Adrenal gland (tissue), 19 donors: ENCODE measurements at regions of chr14 and their contacts with region 1.

Region 1: GRCh38 chr14:56474419-56475022 is 105.1 kb upstream of the TMEM260 start:
- DNase-seq: no peak
- H3K4me3 ChIP-seq: no peak overlapping the region
- H3K27ac ChIP-seq: no peak overlapping the region
- H3K4me1 ChIP-seq: no peaks in the 10 kb centered on the region
- H3K27me3 ChIP-seq: no peaks in the 10 kb centered on the region
- CTCF ChIP-seq: peak; percentile 61 to 84 (median 76)
- POLR2A ChIP-seq: no peak

Region 2: DNA sequence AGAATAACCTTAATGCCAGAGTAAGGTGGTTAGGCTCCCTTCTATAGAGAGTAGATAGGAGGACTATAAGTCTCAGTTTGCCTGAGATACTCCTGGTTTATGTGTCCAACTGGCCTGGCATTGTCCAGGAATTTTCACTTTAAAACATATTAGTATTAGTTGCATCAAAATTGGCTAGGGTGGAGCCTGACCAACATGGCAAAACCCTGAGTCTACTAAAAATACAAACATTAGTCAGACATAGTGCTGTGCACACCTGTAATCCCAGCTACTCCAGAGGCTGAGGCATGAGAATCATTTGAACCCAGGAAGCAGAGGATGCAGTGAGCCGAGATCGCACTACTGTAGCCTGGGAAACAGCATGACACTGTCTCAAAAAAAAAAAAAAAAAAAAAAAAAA is 1459.5 kb before region 1 on chr14:
- intact Hi-C with region 1: no loop called
- DNase-seq: no peak
- H3K4me3 ChIP-seq: no peak overlapping the region
- H3K27ac ChIP-seq: no peak overlapping the region
- H3K4me1 ChIP-seq: no peaks in the 10 kb centered on the region
- H3K27me3 ChIP-seq: no peaks in the 10 kb centered on the region
- CTCF ChIP-seq: no peak
- POLR2A ChIP-seq: no peak

Region 3: GRCh38 chr14:55715889-55716288 is 758.6 kb before region 1 on chr14:
- intact Hi-C with region 1: loop called in 1 of 2 experiments (anchors 10 kb)
- DNase-seq: peak in 2 of 7 donors; percentile 3 to 58
- H3K4me3 ChIP-seq: no peak overlapping the region
- H3K27ac ChIP-seq: no peak overlapping the region
- H3K4me1 ChIP-seq: no peaks in the 10 kb centered on the region
- H3K27me3 ChIP-seq: no peaks in the 10 kb centered on the region
- CTCF ChIP-seq: no peak
- POLR2A ChIP-seq: no peak